ENCODE measurements at regions of chr19 and their contacts with region 1.

Region 1: GRCh38 chr19:48993175-48994034 is at the starts of genes GYS1 and RUVBL2:
- DNase-seq: peak; percentile 100
- ATAC-seq: peak; percentile 95
- H3K4me3 Mint-ChIP-seq: peak within 1 kb of the TSS; percentile 100
- H3K27ac Mint-ChIP-seq: peak within 1 kb of the TSS; percentile 97
- H3K4me1 Mint-ChIP-seq: peaks cover 41% of the 10 kb centered on the region
- H3K27me3 Mint-ChIP-seq: no peaks in the 10 kb centered on the region
- total RNA-seq, gene GYS1: 80.2 to 102 TPM
- total RNA-seq, gene RUVBL2: 155 to 178 TPM

Region 2: DNA sequence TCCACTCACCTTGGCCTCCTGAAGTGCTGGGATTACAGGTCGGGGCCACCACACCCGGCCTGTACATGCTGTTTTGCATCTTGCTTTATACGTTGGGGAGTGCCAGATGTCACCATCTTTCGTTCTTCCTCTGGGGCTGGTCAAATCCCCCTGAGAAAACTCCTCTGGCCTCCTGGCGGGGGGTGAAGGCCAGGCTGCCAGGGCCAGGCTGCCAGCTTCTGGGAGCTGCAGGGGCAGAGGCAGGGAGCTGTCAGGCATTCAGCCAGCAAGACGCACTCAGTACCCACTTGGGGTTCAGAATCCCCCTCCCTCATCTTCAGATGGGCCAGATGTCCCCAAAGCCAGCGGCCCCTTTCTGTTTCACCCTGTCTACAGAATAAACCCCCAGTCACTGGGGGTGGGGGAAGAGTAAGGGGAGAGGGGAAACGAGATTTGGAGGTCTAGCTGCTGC is 806.8 kb before region 1 on chr19:
- CTCF ChIA-PET with region 1: no interaction called
- POLR2A ChIA-PET with region 1: no interaction called
- intact Hi-C with region 1: no loop called
- DNase-seq: no peak
- ATAC-seq: no peak
- H3K4me3 Mint-ChIP-seq: no peak overlapping the region
- H3K27ac Mint-ChIP-seq: no peak overlapping the region
- H3K4me1 Mint-ChIP-seq: no peaks in the 10 kb centered on the region
- H3K27me3 Mint-ChIP-seq: no peaks in the 10 kb centered on the region

Region 3: GRCh38 chr19:48308631-48309586 is 684.5 kb before region 1 on chr19:
- CTCF ChIA-PET with region 1: no interaction called
- POLR2A ChIA-PET with region 1: no interaction called
- intact Hi-C with region 1: no loop called
- DNase-seq: no peak
- ATAC-seq: no peak
- H3K4me3 Mint-ChIP-seq: no peak overlapping the region
- H3K27ac Mint-ChIP-seq: no peak overlapping the region
- H3K4me1 Mint-ChIP-seq: no peaks in the 10 kb centered on the region
- H3K27me3 Mint-ChIP-seq: no peaks in the 10 kb centered on the region

Region 4: DNA sequence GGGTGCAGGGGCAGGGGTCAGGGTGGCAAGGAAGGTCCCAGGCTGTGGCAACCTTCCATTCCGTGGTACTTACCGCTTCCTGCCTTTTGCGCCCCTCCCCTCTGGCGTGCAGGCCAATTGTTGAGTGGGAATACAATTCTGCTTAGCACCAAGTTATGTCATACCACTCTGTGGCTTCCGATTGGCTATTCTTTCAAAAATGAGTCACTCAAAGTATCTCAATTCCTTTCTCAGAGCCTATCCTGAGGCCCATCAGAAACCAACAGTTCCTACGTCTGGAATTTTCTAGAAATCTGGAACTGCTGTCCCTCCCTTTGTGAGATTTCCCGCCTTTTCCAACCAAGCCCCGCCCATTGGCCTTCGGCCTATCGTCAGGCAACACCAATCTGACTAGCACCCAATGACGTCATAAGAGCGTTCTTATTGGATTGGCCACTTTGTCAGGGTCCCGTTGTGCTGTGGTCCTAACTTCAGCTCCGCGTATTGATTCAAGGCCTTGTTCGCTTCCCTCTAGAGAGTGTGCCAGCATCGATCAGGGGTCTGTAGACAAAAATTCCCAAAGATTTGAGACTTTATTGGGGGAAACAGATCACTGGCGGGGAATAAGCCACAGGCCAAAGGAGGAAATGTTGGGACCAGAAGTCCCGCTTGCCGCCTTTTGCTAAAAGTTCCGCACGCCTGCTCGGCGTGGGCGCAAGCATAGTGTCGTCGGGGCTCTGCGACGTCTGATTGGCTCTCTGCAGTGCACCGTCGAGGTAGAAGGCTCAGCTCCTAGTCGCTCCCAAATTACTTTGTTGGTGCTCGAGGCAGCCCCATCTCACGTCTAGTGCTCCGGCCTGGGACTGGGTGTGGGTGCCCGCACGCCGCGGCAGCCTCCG is 332.3 kb before region 1 on chr19:
- CTCF ChIA-PET with region 1: interaction called, 3 read pairs
- POLR2A ChIA-PET with region 1: no interaction called
- intact Hi-C with region 1: loop called in 1 of 2 experiments (anchors 1 kb)
- DNase-seq: peak; percentile 88
- ATAC-seq: peak; percentile 94
- H3K4me3 Mint-ChIP-seq: peak overlapping the region; percentile 10
- H3K27ac Mint-ChIP-seq: peak overlapping the region; percentile 94
- H3K4me1 Mint-ChIP-seq: peaks cover 7% of the 10 kb centered on the region
- H3K27me3 Mint-ChIP-seq: no peaks in the 10 kb centered on the region

Region 5: DNA sequence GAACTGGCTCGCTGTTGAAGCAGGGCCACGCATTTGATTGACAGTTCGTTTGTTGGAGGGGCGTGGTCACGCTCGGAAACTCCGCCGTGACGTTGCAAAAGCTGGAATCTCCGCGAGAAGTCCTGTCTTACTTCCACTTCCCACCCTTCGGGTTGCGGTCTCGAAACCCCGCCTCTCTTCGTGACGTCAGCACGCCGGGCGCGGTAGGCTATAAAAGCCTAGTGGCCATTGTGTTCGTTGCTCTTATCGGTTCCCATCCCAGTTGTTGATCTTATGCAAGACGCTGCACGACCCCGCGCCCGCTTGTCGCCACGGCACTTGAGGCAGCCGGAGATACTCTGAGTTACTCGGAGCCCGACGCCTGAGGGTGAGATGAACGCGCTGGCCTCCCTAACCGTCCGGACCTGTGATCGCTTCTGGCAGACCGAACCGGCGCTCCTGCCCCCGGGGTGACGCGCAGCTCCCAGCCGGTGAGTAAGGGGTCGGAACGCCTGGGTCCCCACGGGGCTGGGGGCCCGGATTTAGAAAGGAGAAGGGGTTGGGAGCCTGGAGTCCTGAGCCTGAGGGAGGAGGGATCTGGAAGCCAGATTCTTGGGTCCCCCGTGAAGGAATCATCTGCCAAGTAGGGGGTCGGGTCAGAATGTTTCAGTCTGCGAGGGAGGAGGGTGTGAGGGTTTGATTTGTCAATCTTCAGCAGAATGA is 121.1 kb before region 1 on chr19 and contains the start of gene PPP1R15A:
- CTCF ChIA-PET with region 1: interaction called, 4 read pairs
- POLR2A ChIA-PET with region 1: interaction called, 7 read pairs
- intact Hi-C with region 1: loop called in 1 of 2 experiments (anchors 1 kb)
- DNase-seq: peak; percentile 99
- ATAC-seq: peak; percentile 50
- H3K4me3 Mint-ChIP-seq: peak within 1 kb of the TSS; percentile 98
- H3K27ac Mint-ChIP-seq: peak within 1 kb of the TSS; percentile 99
- H3K4me1 Mint-ChIP-seq: peaks cover 41% of the 10 kb centered on the region
- H3K27me3 Mint-ChIP-seq: no peaks in the 10 kb centered on the region
- total RNA-seq, gene PPP1R15A: 51.6 to 62.4 TPM

Region 6: GRCh38 chr19:48970923-48971395 is 22.4 kb before region 1 on chr19:
- CTCF ChIA-PET with region 1: interaction called, 45 read pairs
- POLR2A ChIA-PET with region 1: no interaction called
- intact Hi-C with region 1: no loop called
- DNase-seq: peak; percentile 91
- ATAC-seq: peak; percentile 84
- H3K4me3 Mint-ChIP-seq: no peak overlapping the region
- H3K27ac Mint-ChIP-seq: no peak overlapping the region
- H3K4me1 Mint-ChIP-seq: peaks cover 17% of the 10 kb centered on the region
- H3K27me3 Mint-ChIP-seq: no peaks in the 10 kb centered on the region

Region 7: DNA sequence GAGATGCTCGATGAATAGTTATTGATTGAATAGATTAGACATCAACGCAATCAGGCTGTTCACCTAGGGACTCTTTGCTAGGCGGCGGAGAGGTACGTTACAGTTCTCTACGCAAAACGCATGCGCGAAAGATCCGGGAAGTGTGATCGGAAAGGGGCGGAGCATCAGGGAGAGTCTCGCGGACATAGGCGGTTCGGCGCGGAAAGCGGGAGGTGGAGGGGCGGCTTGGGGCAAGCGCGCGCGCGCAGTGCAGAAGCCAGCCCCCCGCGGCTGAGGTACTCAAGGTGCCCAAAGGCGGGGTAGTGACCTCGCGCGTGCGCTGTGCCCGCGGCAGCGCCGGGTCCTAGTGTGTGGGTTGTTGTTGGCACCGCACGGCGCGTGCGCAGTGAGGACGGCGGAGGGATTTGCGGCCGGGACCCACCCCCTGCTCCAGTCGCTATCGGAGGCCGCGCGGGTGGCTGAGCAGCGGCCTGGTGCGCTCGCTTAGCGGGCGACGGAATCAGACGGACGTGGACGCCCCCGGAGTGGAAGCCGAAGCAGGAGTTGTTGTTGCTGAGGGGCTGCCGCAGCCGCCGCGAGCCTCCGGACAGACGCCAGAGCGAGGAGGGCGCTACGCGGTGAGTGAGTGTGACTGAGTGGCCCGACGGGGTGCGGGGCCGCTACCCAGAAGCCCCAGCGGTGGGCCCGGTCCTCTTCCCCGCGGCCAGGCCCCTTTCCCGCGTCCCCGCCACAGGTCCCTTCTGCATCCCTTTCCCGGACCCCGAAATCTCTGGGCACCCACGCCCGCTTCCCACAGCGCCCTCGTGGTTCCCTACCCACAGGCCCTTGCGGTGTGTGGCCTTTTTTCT is 91.8 kb after region 1 on chr19 and contains the start of gene SNRNP70:
- CTCF ChIA-PET with region 1: interaction called, 4 read pairs
- POLR2A ChIA-PET with region 1: no interaction called
- intact Hi-C with region 1: loop called in 1 of 2 experiments (anchors 1 kb)
- DNase-seq: peak; percentile 99
- ATAC-seq: peak; percentile 99
- H3K4me3 Mint-ChIP-seq: peak within 1 kb of the TSS; percentile 98
- H3K27ac Mint-ChIP-seq: peak within 1 kb of the TSS; percentile 96
- H3K4me1 Mint-ChIP-seq: peaks cover 31% of the 10 kb centered on the region
- H3K27me3 Mint-ChIP-seq: peaks cover 2% of the 10 kb centered on the region
- total RNA-seq, gene SNRNP70: 225 to 306 TPM

Region 8: GRCh38 chr19:49282184-49282583 is 288.8 kb after region 1 on chr19:
- CTCF ChIA-PET with region 1: no interaction called
- POLR2A ChIA-PET with region 1: no interaction called
- intact Hi-C with region 1: no loop called
- DNase-seq: no peak
- ATAC-seq: no peak
- H3K4me3 Mint-ChIP-seq: no peak overlapping the region
- H3K27ac Mint-ChIP-seq: no peak overlapping the region
- H3K4me1 Mint-ChIP-seq: no peaks in the 10 kb centered on the region
- H3K27me3 Mint-ChIP-seq: no peaks in the 10 kb centered on the region

Region 9: GRCh38 chr19:49487277-49488045 is 494.1 kb after region 1 on chr19 and contains the start of gene RPL13A:
- CTCF ChIA-PET with region 1: no interaction called
- POLR2A ChIA-PET with region 1: no interaction called
- intact Hi-C with region 1: loop called in 1 of 2 experiments (anchors 1 kb)
- DNase-seq: peak; percentile 100
- ATAC-seq: peak; percentile 90
- H3K4me3 Mint-ChIP-seq: peak within 1 kb of the TSS; percentile 99
- H3K27ac Mint-ChIP-seq: peak within 1 kb of the TSS; percentile 97
- H3K4me1 Mint-ChIP-seq: peaks cover 26% of the 10 kb centered on the region
- H3K27me3 Mint-ChIP-seq: no peaks in the 10 kb centered on the region
- total RNA-seq, gene RPL13A: 3,861 to 3,967 TPM

Region 10: DNA sequence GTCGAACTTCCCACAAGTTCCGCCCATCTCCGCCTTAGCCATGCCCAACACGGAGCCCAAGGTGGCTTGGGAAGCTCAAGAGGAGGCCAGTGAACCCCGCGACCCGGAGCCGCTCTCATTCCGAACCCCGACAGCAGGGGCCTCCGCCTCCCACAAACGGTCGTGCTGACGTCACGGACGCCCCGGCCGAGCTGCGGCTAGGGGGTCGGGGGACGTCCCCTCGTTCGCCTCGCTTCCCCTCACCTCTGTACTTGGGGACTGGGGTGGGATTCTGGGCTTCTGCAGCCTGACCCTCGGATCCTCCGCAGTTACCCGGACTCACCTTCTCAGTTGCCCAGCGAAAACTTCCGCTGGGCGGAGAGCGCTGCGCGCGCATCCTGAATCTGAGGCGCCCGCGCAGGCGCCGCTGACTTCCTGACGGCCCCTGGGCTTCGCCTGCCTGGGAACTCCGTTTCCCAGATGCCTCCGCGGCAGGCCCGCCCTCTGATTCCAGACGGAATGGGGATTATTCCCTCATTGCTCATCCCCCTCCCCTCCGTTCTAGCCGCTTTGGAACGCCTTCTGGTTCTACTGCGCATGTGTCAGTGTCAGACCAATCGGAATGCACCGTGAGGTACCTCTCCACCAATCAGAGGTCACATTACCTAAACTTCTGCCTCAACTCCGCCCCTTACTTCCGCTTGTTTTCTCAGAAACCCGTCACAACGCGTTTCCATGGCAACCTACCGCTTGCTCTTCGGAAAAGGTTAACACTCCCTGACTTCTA is 1031.8 kb after region 1 on chr19 and contains the start of gene VRK3:
- CTCF ChIA-PET with region 1: no interaction called
- POLR2A ChIA-PET with region 1: no interaction called
- intact Hi-C with region 1: loop called in 1 of 2 experiments (anchors 2 kb)
- DNase-seq: peak; percentile 98
- ATAC-seq: peak; percentile 91
- H3K4me3 Mint-ChIP-seq: peak within 1 kb of the TSS; percentile 85
- H3K27ac Mint-ChIP-seq: peak within 1 kb of the TSS; percentile 95
- H3K4me1 Mint-ChIP-seq: peaks cover 44% of the 10 kb centered on the region
- H3K27me3 Mint-ChIP-seq: no peaks in the 10 kb centered on the region
- total RNA-seq, gene VRK3: 52.4 to 61.2 TPM

Measured in activated CD4-positive, alpha-beta T cell treated with anti-CD3 and anti-CD28 coated beads for 36 hours (primary cell).